Panc1 (cell line): ENCODE measurements at regions of chr10 and their contacts with region 1.

Region 1: DNA sequence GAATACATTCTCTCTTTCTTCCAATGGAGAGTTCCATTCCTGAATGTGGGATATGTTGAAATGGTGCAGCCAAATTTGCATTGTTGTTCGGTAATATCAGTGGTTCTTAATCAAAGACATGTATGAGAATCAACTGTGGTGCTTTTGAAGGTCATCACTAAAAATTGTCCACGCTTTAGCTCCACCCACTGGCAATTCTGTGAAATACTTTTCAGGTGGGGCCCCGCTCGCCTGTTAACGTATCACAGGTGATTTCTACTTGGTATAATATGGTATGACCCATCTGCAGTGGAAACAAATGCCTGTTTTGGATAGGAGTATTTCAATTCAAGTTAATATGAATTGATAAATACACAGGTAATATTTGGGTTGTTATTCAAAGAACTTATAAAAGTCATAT is 178.4 kb downstream of the NSUN6 start:
- DNase-seq: no peak
- ATAC-seq: no peak
- H3K4me3 ChIP-seq: no peak overlapping the region
- H3K27ac ChIP-seq: no peak overlapping the region
- H3K4me1 ChIP-seq: no peaks in the 10 kb centered on the region
- H3K27me3 ChIP-seq: no peaks in the 10 kb centered on the region
- CTCF ChIP-seq: peak; percentile 27; the same call in 1 of the 2 replicates

Region 2: DNA sequence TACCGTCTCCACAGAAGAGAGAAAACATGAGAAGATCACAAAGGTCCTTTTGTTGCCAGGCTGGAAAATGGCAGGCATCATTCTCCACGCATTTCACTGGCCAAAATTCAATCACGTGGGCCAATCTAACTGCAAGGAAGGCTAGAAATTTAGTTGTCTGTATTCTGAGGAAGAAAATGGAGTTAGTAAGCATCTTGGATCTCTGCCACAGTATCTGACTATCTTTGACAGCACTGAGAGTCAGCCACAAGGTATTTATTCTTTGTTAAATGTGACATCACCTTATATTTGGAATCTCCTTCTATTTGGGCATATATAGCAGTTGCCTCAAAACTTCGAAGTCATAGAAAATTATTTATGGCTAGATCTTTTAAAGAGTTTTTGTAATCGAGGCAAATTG is 35.5 kb before region 1 on chr10:
- CTCF ChIA-PET with region 1: no interaction called
- POLR2A ChIA-PET with region 1: interaction called, 20 read pairs
- in situ Hi-C with region 1: no loop called
- intact Hi-C with region 1: no loop called
- DNase-seq: no peak
- ATAC-seq: no peak
- H3K4me3 ChIP-seq: no peak overlapping the region
- H3K27ac ChIP-seq: no peak overlapping the region
- H3K4me1 ChIP-seq: no peaks in the 10 kb centered on the region
- H3K27me3 ChIP-seq: no peaks in the 10 kb centered on the region
- CTCF ChIP-seq: no peak

Region 3: GRCh38 chr10:18449611-18450026 is 23.4 kb before region 1 on chr10:
- CTCF ChIA-PET with region 1: no interaction called
- POLR2A ChIA-PET with region 1: no interaction called
- in situ Hi-C with region 1: no loop called
- intact Hi-C with region 1: no loop called
- DNase-seq: no peak
- ATAC-seq: no peak
- H3K4me3 ChIP-seq: no peak overlapping the region
- H3K27ac ChIP-seq: no peak overlapping the region
- H3K4me1 ChIP-seq: no peaks in the 10 kb centered on the region
- H3K27me3 ChIP-seq: 0 out of 2 replicates have a peak, but pooled peaks cover 2% of the 10 kb centered on the region
- CTCF ChIP-seq: no peak

Region 4: DNA sequence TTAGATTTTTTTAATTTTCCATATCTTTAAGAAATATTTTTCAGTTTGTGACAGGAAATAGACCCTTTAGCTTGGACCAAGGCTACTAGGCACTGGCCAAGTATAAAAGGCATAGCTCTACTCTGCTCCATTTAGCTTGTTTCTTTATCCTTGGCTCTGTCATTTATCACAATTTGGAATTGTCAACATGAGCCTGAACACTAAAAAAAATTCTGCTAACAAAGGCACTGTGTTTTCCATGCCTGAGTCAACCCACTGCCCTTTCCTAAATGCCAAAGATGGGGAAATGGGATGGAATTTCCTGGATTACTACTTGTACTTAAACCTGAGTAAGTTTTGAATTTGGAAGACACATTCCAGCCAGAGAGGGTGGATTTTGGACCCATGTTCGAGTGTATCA is 50.0 kb after region 1 on chr10:
- CTCF ChIA-PET with region 1: no interaction called
- POLR2A ChIA-PET with region 1: no interaction called
- in situ Hi-C with region 1: no loop called
- intact Hi-C with region 1: no loop called
- DNase-seq: no peak
- ATAC-seq: no peak
- H3K4me3 ChIP-seq: no peak overlapping the region
- H3K27ac ChIP-seq: no peak overlapping the region
- H3K4me1 ChIP-seq: no peaks in the 10 kb centered on the region
- H3K27me3 ChIP-seq: no peaks in the 10 kb centered on the region
- CTCF ChIP-seq: no peak